ENCODE measurements at regions of chr4 and their contacts with region 1.

Region 1: DNA sequence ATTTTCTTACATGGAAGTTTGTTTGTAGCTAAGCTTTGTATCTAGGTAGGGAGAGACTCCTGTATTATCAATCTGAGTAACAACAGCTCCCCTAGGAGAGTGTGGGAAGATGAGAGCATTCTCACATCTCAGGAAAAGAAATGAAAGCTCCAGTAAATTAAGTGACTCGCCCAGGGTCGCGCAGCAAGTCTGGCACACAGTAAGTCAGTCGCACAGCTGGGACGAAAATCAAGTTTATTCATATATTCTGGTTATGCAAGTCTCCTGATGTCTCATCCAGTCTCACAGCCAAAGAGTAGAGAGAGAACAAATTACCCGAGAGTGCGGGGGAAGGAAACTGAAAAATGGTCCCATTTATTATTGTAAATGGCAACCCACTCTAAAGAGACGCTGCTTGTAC is 216.1 kb downstream of the STK32B start:
- DNase-seq: no peak
- ATAC-seq: no peak
- H3K4me3 ChIP-seq: no peak overlapping the region
- H3K27ac ChIP-seq: no peak overlapping the region
- H3K4me1 ChIP-seq: no peaks in the 10 kb centered on the region
- H3K27me3 ChIP-seq: no peaks in the 10 kb centered on the region
- CTCF ChIP-seq: no peak
- POLR2A ChIP-seq: no peak

Region 2: GRCh38 chr4:5365071-5366008 is 97.9 kb after region 1 on chr4:
- in situ Hi-C with region 1: loop called in 1 of 4 experiments (anchors 25 kb)
- intact Hi-C with region 1: no loop called
- DNase-seq: no peak
- ATAC-seq: no peak
- H3K4me3 ChIP-seq: no peak overlapping the region
- H3K27ac ChIP-seq: no peak overlapping the region
- H3K4me1 ChIP-seq: no peaks in the 10 kb centered on the region
- H3K27me3 ChIP-seq: no peaks in the 10 kb centered on the region
- CTCF ChIP-seq: no peak
- POLR2A ChIP-seq: no peak